Tibial artery (tissue), 4 donors: ENCODE measurements at regions of chr6 and their contacts with region 1.

Region 1: GRCh38 chr6:149082286-149082707 is 235.2 kb upstream of the TAB2 start:
- DNase-seq: peak; percentile 80 to 83
- H3K4me3 ChIP-seq: no peak overlapping the region
- H3K27ac ChIP-seq: no peak overlapping the region
- H3K4me1 ChIP-seq: peaks cover 0 to 22% (median 10%) of the 10 kb centered on the region in 4 donors
- H3K27me3 ChIP-seq: peaks cover 0 to 5% of the 10 kb centered on the region in 2 donors
- CTCF ChIP-seq: peak; percentile 62 to 70

Region 2: DNA sequence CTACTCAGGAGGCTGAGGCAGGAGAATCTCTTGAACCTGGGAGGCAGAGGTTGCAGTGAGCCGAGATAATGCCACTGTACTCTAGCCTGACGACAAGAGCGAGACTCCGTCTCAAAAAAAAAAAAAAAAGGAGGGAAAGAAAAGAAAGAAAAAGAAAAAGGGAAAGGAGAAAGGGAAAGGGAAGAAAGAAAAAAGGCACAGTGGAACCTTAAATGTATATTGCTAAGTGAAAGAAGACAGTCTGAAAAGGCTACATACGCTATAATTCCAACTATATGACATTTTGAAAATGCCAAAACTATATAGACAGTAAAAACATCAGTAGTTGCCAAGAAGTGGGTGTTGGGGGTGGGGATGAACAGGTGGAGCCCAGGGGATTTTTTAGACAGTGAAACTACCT is 447.4 kb after region 1 on chr6:
- intact Hi-C with region 1: loop called (anchors 10 kb)
- DNase-seq: no peak
- H3K4me3 ChIP-seq: no peak overlapping the region
- H3K27ac ChIP-seq: no peak overlapping the region
- H3K4me1 ChIP-seq: no peaks in the 10 kb centered on the region
- H3K27me3 ChIP-seq: no peaks in the 10 kb centered on the region
- CTCF ChIP-seq: no peak